AG04450 (cell line): ENCODE measurements at regions of chr1 and their contacts with region 1.

Region 1: GRCh38 chr1:229258031-229258756 is 12.7 kb upstream of the RAB4A start:
- DNase-seq: peak; percentile 30
- H3K4me3 ChIP-seq: no peak overlapping the region
- H3K27ac ChIP-seq: no peak overlapping the region
- H3K27me3 ChIP-seq: no peaks in the 10 kb centered on the region
- CTCF ChIP-seq: peak; percentile 83

Region 2: GRCh38 chr1:228691926-228692325 is 566.3 kb before region 1 on chr1:
- CTCF ChIA-PET with region 1: interaction called, 15 read pairs
- POLR2A ChIA-PET with region 1: no interaction called
- DNase-seq: no peak
- H3K4me3 ChIP-seq: no peak overlapping the region
- H3K27ac ChIP-seq: no peak overlapping the region
- H3K27me3 ChIP-seq: no peaks in the 10 kb centered on the region
- CTCF ChIP-seq: peak; percentile 40

Region 3: GRCh38 chr1:229094476-229095311 is 163.5 kb before region 1 on chr1:
- CTCF ChIA-PET with region 1: no interaction called
- POLR2A ChIA-PET with region 1: no interaction called
- DNase-seq: no peak
- H3K4me3 ChIP-seq: no peak overlapping the region
- H3K27ac ChIP-seq: no peak overlapping the region
- H3K27me3 ChIP-seq: peaks cover 3% of the 10 kb centered on the region
- CTCF ChIP-seq: no peak

Region 4: DNA sequence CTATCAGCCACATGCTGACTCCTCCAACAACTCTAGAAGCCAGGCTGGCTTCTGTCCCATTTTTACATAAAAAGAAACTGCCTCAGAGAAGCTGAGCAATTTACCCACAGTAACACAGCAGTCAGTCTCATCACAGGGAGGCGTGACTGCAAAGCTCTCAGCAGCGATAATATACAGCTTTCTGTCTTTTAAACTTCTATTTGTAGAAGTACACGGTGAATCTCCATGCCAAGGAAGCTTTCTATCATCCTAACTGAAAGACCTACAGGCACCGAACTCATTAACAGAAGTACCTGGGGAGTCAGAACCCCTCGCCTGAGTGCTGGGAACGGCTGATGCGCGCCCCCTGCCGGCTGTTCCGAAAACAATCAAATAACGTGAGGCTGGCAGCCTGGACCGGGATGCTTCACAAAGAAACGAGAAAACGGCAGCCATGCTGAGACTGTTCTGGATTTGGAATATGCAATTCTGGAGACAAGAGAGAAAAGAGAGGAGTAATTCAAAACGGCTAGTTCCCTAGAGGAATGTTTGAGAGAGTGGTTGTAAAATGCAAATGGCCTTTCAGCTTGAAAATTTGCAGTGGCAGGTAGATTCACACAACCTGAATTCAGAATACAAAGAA is 30.8 kb before region 1 on chr1:
- CTCF ChIA-PET with region 1: interaction called, 17 read pairs
- POLR2A ChIA-PET with region 1: no interaction called
- DNase-seq: no peak
- H3K4me3 ChIP-seq: no peak overlapping the region
- H3K27ac ChIP-seq: no peak overlapping the region
- H3K27me3 ChIP-seq: peaks cover 14% of the 10 kb centered on the region
- CTCF ChIP-seq: peak; percentile 83

Region 5: GRCh38 chr1:229370601-229371021 is 112.4 kb after region 1 on chr1:
- CTCF ChIA-PET with region 1: no interaction called
- POLR2A ChIA-PET with region 1: no interaction called
- DNase-seq: no peak
- H3K4me3 ChIP-seq: no peak overlapping the region
- H3K27ac ChIP-seq: no peak overlapping the region
- H3K27me3 ChIP-seq: peaks cover 13% of the 10 kb centered on the region
- CTCF ChIP-seq: no peak

Region 6: GRCh38 chr1:229440851-229441537 is 182.8 kb after region 1 on chr1:
- CTCF ChIA-PET with region 1: interaction called, 15 read pairs
- POLR2A ChIA-PET with region 1: no interaction called
- DNase-seq: peak; percentile 66
- H3K4me3 ChIP-seq: no peak overlapping the region
- H3K27ac ChIP-seq: peak overlapping the region; percentile 57
- H3K27me3 ChIP-seq: peaks cover 2% of the 10 kb centered on the region
- CTCF ChIP-seq: no peak

Region 7: GRCh38 chr1:229479660-229480399 is 221.6 kb after region 1 on chr1:
- CTCF ChIA-PET with region 1: interaction called, 207 read pairs
- POLR2A ChIA-PET with region 1: no interaction called
- DNase-seq: no peak
- H3K4me3 ChIP-seq: no peak overlapping the region
- H3K27ac ChIP-seq: no peak overlapping the region
- H3K27me3 ChIP-seq: no peaks in the 10 kb centered on the region
- CTCF ChIP-seq: no peak